Activated B cell treated with CpG ODN at 0.5 μM for 24 hours (primary cell): ENCODE measurements at regions of chr13 and their contacts with region 1.

Region 1: DNA sequence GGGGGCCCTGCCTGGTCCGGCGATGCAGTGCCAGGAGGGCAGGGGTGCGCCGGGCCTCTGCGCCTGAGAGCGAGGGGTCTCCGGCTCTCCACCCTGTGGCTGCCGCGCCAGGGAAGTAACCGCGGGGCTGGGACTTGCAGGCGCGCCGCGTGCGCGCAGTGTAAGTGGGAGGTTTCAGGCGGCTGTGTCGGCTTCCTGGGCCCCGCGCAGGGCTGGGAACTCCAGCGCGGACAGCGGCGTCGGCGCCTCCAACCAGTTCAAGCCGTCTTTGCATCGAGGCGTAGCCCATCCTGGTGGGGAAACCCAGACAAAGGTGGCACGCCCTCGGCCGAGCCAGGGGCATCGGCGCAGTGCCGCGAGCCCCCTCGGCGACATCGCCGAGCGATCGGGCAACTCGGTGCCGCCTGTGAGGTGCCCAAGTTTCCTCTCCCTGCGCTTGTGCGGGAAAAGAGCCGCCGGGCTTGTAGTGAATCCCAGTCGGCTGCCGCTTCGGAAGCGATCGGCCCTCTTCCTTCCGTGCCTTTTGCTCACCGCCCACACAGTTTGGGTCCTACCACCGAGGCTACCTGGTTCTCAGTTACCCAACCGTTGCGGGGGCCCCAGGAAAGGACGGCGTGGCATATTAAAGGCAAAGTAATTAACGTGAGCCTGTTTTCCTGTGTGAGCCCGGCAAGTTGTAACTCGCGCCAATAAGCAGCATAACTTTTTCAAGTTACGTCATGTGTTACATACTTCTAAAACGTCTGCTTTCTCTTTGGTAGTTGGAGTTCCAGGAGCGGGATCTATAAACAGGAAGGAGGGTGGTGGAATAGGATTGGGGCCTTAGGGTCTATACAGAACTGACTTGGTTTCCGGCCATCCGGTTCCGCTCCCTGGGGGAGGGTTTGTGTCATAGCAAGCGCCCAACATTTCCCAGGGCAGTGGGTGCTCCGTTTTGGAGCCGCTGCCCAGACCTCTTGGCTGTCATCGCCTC is 1.2 kb downstream of the LRCH1 start:
- DNase-seq: peak; percentile 72
- ATAC-seq: peak; percentile 57
- H3K4me3 Mint-ChIP-seq: peak overlapping the region; percentile 96
- H3K27ac Mint-ChIP-seq: peak overlapping the region; percentile 94
- H3K4me1 Mint-ChIP-seq: peaks cover 53% of the 10 kb centered on the region
- H3K27me3 Mint-ChIP-seq: no peaks in the 10 kb centered on the region
- CTCF ChIP-seq: no peak

Region 2: GRCh38 chr13:46387064-46387851 is 166.9 kb before region 1 on chr13 and contains the start of gene RUBCNL:
- CTCF ChIA-PET with region 1: no interaction called
- POLR2A ChIA-PET with region 1: interaction called, 5 read pairs
- intact Hi-C with region 1: loop called (anchors 2 kb)
- DNase-seq: peak; percentile 69
- ATAC-seq: peak; percentile 46
- H3K4me3 Mint-ChIP-seq: peak within 1 kb of the TSS; percentile 95
- H3K27ac Mint-ChIP-seq: peak within 1 kb of the TSS; percentile 93
- H3K4me1 Mint-ChIP-seq: peaks cover 68% of the 10 kb centered on the region
- H3K27me3 Mint-ChIP-seq: no peaks in the 10 kb centered on the region
- CTCF ChIP-seq: no peak
- total RNA-seq, gene RUBCNL: 133 and 168 TPM in 2 replicates

Region 3: GRCh38 chr13:46565808-46566750 is 11.9 kb after region 1 on chr13:
- CTCF ChIA-PET with region 1: interaction called, 11 read pairs
- POLR2A ChIA-PET with region 1: interaction called, 9 read pairs
- intact Hi-C with region 1: loop called (anchors 1 kb)
- DNase-seq: no peak
- ATAC-seq: peak; percentile 82
- H3K4me3 Mint-ChIP-seq: no peak overlapping the region
- H3K27ac Mint-ChIP-seq: peak overlapping the region; percentile 14
- H3K4me1 Mint-ChIP-seq: peaks cover 65% of the 10 kb centered on the region
- H3K27me3 Mint-ChIP-seq: no peaks in the 10 kb centered on the region
- CTCF ChIP-seq: no peak

Region 4: GRCh38 chr13:46587807-46588418 is 33.7 kb after region 1 on chr13:
- CTCF ChIA-PET with region 1: interaction called, 14 read pairs
- POLR2A ChIA-PET with region 1: interaction called, 45 read pairs
- intact Hi-C with region 1: no loop called
- DNase-seq: no peak
- ATAC-seq: peak; percentile 69
- H3K4me3 Mint-ChIP-seq: peak overlapping the region; percentile 59
- H3K27ac Mint-ChIP-seq: peak overlapping the region; percentile 87
- H3K4me1 Mint-ChIP-seq: peaks cover 99% of the 10 kb centered on the region
- H3K27me3 Mint-ChIP-seq: no peaks in the 10 kb centered on the region
- CTCF ChIP-seq: no peak

Region 5: DNA sequence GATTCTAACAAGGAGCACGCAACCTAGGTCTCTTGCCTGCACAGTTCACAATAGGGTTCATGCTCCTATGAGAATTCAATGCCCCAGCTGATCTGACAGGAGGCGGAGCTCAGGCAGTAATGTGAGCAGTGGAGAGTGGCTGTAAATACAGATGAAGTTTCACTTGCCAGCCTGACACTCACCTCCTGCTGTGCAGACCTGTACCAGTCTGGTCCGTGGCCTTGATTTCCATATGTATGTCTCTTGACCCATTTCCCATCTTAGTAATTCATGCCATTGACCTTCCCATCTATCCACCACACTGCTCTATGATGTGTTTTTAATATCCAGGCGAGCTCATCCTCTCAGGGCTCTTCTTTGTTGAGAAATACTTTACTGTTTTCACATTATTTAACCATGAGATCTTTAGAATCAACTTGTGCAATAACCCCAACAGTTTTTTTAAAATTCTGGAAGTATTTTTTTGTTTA is 94.0 kb after region 1 on chr13:
- CTCF ChIA-PET with region 1: interaction called, 6 read pairs
- POLR2A ChIA-PET with region 1: interaction called, 14 read pairs
- intact Hi-C with region 1: loop called (anchors 1 kb)
- DNase-seq: no peak
- ATAC-seq: peak; percentile 87
- H3K4me3 Mint-ChIP-seq: peak overlapping the region; percentile 11
- H3K27ac Mint-ChIP-seq: peak overlapping the region; percentile 46
- H3K4me1 Mint-ChIP-seq: peaks cover 70% of the 10 kb centered on the region
- H3K27me3 Mint-ChIP-seq: no peaks in the 10 kb centered on the region
- CTCF ChIP-seq: no peak

Region 6: GRCh38 chr13:46687810-46688209 is 133.6 kb after region 1 on chr13:
- CTCF ChIA-PET with region 1: interaction called, 49 read pairs
- POLR2A ChIA-PET with region 1: interaction called, 4 read pairs
- intact Hi-C with region 1: no loop called
- DNase-seq: no peak
- ATAC-seq: peak; percentile 67
- H3K4me3 Mint-ChIP-seq: no peak overlapping the region
- H3K27ac Mint-ChIP-seq: no peak overlapping the region
- H3K4me1 Mint-ChIP-seq: peaks cover 24% of the 10 kb centered on the region
- H3K27me3 Mint-ChIP-seq: no peaks in the 10 kb centered on the region
- CTCF ChIP-seq: no peak

Region 7: GRCh38 chr13:46796515-46797474 is 242.6 kb after region 1 on chr13 and contains the start of gene ESD:
- CTCF ChIA-PET with region 1: interaction called, 3 read pairs
- POLR2A ChIA-PET with region 1: no interaction called
- intact Hi-C with region 1: loop called (anchors 2 kb)
- DNase-seq: peak; percentile 86
- ATAC-seq: peak; percentile 95
- H3K4me3 Mint-ChIP-seq: peak within 1 kb of the TSS; percentile 97
- H3K27ac Mint-ChIP-seq: peak within 1 kb of the TSS; percentile 96
- H3K4me1 Mint-ChIP-seq: peaks cover 38% of the 10 kb centered on the region
- H3K27me3 Mint-ChIP-seq: no peaks in the 10 kb centered on the region
- CTCF ChIP-seq: no peak
- total RNA-seq, gene ESD: 73.5 and 74.2 TPM in 2 replicates